ENCODE measurements at regions of chr4 and their contacts with region 1.

Region 1: DNA sequence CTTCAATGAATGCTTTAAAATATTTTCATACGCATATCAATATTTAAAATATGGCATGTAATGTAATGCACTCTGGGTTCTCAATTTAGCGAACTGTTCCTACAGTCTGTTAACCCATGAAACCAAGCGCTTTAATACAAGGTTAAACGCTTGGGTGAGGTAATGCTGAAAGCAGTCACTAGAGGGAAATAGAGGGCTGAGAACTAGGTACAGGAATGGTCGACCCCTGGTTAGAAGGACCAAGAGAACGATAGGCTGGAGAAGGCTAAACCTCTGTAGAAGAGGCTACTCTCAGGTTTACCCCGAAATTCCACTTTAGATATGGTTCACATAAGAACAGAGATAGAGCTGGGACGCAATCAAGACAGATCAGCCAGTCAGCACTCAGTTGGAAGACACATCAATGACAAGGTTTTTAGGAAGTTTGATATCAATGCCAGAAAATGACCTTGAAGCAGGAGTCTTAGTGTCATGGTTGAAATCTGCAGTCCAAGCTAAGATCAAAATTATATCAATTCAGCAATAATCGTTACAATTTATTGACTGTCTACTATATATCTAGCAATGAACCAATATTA is 26.9 kb downstream of the ARSJ start:
- ATAC-seq: peak in 4 of 8 experiments; percentile 40 to 93 (median 62)
- H3K4me3 ChIP-seq: no peak overlapping the region
- H3K27ac ChIP-seq: no peak overlapping the region
- H3K4me1 ChIP-seq: no peaks in the 10 kb centered on the region

Region 2: DNA sequence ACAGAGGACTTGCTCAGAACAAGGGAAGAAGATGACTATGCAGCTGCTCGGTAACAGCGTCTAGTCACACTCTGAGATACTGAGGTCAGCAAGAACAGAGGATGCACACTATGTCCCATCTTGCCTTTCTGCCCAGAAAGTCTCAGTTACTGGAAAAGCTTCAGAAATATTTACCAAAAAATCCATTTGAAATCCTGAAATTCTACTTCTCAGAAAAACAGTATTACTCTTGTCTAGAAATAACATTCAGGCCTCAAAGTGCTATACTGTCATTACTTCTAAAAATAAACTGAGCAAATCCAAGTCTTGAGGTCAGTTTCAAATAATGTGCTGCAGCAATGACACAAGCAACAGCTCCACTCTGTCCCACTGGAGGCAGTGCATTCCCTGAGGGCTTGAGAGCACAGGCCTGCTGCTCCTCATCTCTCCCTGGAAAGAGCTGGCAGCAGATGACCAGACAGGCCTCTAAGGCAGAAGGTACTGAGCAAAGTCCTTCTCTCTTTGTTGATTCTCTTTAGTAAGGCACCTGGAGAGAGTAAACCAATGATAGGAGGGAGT is 267.9 kb before region 1 on chr4:
- in situ Hi-C with region 1: no loop called
- ATAC-seq: peak; percentile 77 to 98 (median 96)
- H3K4me3 ChIP-seq: no peak overlapping the region
- H3K27ac ChIP-seq: no peak overlapping the region
- H3K4me1 ChIP-seq: no peaks in the 10 kb centered on the region

Region 3: GRCh38 chr4:114077610-114078009 is 125.1 kb after region 1 on chr4:
- in situ Hi-C with region 1: loop called in 1 of 9 experiments (anchors 10 kb)
- ATAC-seq: peak in 2 of 8 experiments; percentile 68 to 81
- H3K4me3 ChIP-seq: no peak overlapping the region
- H3K27ac ChIP-seq: no peak overlapping the region
- H3K4me1 ChIP-seq: no peaks in the 10 kb centered on the region

Region 4: DNA sequence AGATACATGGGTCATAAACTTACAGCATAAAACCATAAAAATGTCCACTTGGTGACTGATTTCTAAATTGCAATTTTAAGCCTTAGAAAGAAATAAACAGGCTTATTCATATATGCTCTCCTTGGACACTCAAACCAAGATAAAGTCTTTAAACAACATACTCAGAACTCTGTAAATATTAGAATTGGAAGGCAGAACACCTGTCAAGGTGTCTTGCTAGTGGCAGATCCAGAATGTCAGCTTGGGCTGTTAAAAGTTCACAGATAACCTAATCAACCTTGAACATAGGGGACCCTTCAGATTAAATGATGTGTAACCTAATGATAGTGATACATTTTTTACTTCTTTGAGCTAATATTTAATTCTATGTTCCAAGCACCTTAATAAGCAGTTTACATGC is 235.1 kb after region 1 on chr4:
- in situ Hi-C with region 1: no loop called
- ATAC-seq: no peak
- H3K4me3 ChIP-seq: no peak overlapping the region
- H3K27ac ChIP-seq: no peak overlapping the region
- H3K4me1 ChIP-seq: no peaks in the 10 kb centered on the region